PC-3 (cell line): ENCODE measurements at regions of chr2 and their contacts with region 1.

Region 1: DNA sequence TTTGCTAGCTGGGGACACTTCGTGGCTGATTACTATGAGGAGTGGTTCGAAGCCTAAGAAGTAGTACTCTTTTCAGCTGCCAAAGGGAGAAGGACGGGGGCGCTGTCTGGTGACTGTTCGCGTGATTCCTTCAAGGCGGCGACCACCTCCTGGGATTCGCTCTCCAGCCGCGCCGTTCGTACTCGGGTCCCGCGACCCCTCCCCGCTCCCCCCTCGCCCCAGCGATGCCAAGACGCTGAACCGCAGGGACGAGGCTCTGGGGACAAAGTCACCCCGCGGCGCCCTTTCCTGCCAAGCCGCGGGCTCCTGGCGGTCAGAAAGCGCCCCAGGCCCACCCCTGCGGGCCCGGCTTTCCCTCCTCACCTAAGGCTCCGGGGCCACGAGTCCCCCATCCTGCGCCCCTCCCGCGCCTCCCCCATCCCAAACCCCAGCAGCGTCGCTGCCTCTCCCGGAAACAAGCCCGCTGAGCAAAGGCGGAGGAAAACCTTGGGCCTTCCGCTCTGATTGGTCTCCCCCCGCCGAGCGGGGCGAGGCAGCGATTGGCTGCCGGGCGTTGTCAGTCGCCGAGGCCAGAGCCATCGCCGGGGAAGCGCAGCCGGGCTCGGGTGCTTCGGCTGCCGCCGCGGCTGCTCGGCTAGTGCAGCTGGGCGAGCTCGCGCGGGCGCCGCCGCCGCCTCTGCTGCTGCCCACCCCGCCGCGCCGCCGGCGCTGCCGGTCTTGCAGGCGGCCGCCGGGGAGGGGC is 404.3 kb downstream of the XIRP2 start:
- DNase-seq: peak; percentile 92
- ATAC-seq: peak; percentile 91
- H3K4me3 ChIP-seq: peak within 1 kb of the TSS; percentile 83
- H3K27ac ChIP-seq: no peak within 1 kb of the TSS
- H3K4me1 ChIP-seq: peaks cover 8% of the 10 kb centered on the region; the same call in 1 of the 2 replicates
- H3K27me3 ChIP-seq: no peaks in the 10 kb centered on the region
- CTCF ChIP-seq: peak; percentile 49; the same call in 1 of the 2 replicates

Region 2: DNA sequence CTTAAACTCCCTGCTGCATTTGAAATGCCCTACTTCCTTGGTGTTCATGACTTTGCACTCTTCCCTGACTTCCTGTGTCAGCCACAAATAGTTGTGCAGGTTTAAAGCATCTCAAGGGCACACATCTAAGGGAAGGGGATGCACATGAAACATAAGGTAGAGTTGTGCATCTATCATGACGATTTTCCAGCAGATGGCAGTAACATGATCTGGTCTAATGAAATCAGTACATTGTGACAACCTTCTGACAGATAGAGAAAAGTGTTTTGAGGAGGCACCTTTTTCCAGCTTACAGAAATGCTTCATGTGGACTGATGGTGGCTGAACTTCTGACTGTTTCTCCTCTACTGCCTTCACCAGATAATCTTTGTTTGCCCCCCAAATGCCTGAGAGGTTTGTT is 165.5 kb before region 1 on chr2:
- CTCF ChIA-PET with region 1: no interaction called
- POLR2A ChIA-PET with region 1: no interaction called
- intact Hi-C with region 1: loop called (anchors 5 kb)
- DNase-seq: peak; percentile 70
- ATAC-seq: peak; percentile 95
- H3K4me3 ChIP-seq: no peak overlapping the region
- H3K27ac ChIP-seq: no peak overlapping the region
- H3K4me1 ChIP-seq: peaks cover 3% of the 10 kb centered on the region; the same call in 1 of the 2 replicates
- H3K27me3 ChIP-seq: no peaks in the 10 kb centered on the region
- CTCF ChIP-seq: peak; percentile 68

Region 3: DNA sequence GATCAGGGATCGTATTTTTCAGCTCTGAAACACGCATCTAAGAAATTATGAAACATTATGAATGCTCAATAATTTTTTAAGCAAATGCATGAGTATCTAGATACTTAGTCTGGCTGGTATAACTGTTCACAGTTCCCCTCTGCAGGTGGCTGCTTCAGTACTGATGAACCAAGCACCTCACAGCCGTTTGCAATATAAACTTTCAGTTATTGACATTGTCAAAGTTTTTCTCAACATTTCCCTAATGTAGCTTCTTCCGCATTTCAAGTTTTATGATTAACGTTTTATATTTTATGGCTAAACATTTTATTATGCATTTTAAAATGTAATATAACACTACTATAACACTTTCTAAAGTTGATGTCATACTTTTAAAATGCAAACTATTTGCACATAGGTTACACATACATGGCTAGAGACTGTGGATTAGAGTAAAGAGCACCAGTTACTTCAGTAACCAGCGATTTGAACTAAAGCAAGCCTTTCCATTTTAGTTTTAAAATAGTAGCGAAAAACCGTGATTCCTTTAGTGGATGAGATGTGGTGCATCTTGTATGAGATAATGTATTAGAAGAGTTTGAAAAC is 91.1 kb after region 1 on chr2:
- CTCF ChIA-PET with region 1: no interaction called
- POLR2A ChIA-PET with region 1: no interaction called
- intact Hi-C with region 1: loop called (anchors 2 kb)
- DNase-seq: peak; percentile 47
- ATAC-seq: peak; percentile 92
- H3K4me3 ChIP-seq: no peak overlapping the region
- H3K27ac ChIP-seq: peak overlapping the region; percentile 21; the same call in 1 of the 2 replicates
- H3K4me1 ChIP-seq: peaks cover 10% of the 10 kb centered on the region
- H3K27me3 ChIP-seq: no peaks in the 10 kb centered on the region
- CTCF ChIP-seq: no peak

Region 4: DNA sequence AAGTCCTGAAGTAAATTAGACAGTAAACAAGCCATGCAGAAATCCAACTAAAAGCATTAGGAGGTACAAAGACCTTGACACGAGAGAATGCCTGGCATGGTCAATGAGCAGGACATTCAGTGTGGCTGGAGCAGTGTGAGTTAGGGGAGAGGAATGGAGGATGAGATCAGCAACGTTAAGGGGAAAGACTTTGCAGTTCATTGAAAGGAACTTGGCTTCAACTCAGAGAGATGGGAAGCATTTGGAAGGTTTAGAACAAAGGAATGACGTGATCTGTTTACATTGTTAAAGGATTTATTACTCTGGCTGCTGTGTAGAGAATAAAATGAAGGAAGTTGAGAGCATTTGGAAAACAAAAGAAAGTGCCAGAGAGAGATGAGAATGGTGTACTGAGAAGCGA is 217.0 kb after region 1 on chr2:
- CTCF ChIA-PET with region 1: interaction called, 3 read pairs
- POLR2A ChIA-PET with region 1: no interaction called
- intact Hi-C with region 1: loop called (anchors 2 kb)
- DNase-seq: peak; percentile 89
- ATAC-seq: peak; percentile 83
- H3K4me3 ChIP-seq: peak overlapping the region; percentile 12; the same call in 1 of the 2 replicates
- H3K27ac ChIP-seq: peak overlapping the region; percentile 69
- H3K4me1 ChIP-seq: peaks cover 29% of the 10 kb centered on the region
- H3K27me3 ChIP-seq: no peaks in the 10 kb centered on the region
- CTCF ChIP-seq: no peak